Endothelial cell of umbilical vein (primary cell): ENCODE measurements at regions of chr10 and their contacts with region 1.

Region 1: DNA sequence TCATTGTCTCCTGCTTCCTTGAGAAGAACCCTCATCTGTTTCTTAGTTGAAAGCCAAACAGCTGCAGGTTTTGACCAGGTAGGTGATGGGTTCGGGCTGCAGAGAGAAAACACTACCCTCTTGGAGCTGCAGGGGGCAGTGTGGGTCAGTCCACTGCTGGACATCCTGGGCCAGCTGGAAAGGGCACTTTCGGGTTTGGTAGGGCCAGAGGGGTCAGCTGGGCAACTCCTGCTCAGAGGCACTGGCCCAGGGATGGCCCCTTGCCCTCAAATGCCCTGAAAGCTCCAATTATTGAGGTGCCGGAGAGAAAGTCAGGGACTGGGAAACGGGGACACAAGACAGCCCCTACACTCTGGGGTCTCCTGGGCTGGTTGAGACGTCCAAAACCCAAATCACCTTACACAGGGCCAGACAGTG is 90.7 kb downstream of the MKI67 start:
- DNase-seq: peak; percentile 30
- H3K4me3 ChIP-seq: no peak overlapping the region
- H3K27ac ChIP-seq: no peak overlapping the region
- H3K4me1 ChIP-seq: peaks cover 22% of the 10 kb centered on the region
- H3K27me3 ChIP-seq: no peaks in the 10 kb centered on the region
- CTCF ChIP-seq: peak; percentile 76 to 83
- POLR2A ChIP-seq: no peak

Region 2: GRCh38 chr10:128018236-128018635 is 17.3 kb before region 1 on chr10:
- CTCF ChIA-PET with region 1: interaction called, 20 read pairs
- POLR2A ChIA-PET with region 1: no interaction called
- dilution Hi-C with region 1: no loop called
- intact Hi-C with region 1: no loop called
- DNase-seq: peak; percentile 73
- H3K4me3 ChIP-seq: no peak overlapping the region
- H3K27ac ChIP-seq: peak overlapping the region; percentile 54
- H3K4me1 ChIP-seq: peaks cover 3% of the 10 kb centered on the region
- H3K27me3 ChIP-seq: no peaks in the 10 kb centered on the region
- CTCF ChIP-seq: no peak
- POLR2A ChIP-seq: peak; percentile 11

Region 3: GRCh38 chr10:128047351-128047750 is 11.8 kb after region 1 on chr10:
- CTCF ChIA-PET with region 1: interaction called, 25 read pairs
- POLR2A ChIA-PET with region 1: no interaction called
- dilution Hi-C with region 1: no loop called
- intact Hi-C with region 1: no loop called
- DNase-seq: peak; percentile 80
- H3K4me3 ChIP-seq: no peak overlapping the region
- H3K27ac ChIP-seq: peak overlapping the region; percentile 58
- H3K4me1 ChIP-seq: peaks cover 17% of the 10 kb centered on the region
- H3K27me3 ChIP-seq: no peaks in the 10 kb centered on the region
- CTCF ChIP-seq: no peak
- POLR2A ChIP-seq: peak; percentile 28

Region 4: DNA sequence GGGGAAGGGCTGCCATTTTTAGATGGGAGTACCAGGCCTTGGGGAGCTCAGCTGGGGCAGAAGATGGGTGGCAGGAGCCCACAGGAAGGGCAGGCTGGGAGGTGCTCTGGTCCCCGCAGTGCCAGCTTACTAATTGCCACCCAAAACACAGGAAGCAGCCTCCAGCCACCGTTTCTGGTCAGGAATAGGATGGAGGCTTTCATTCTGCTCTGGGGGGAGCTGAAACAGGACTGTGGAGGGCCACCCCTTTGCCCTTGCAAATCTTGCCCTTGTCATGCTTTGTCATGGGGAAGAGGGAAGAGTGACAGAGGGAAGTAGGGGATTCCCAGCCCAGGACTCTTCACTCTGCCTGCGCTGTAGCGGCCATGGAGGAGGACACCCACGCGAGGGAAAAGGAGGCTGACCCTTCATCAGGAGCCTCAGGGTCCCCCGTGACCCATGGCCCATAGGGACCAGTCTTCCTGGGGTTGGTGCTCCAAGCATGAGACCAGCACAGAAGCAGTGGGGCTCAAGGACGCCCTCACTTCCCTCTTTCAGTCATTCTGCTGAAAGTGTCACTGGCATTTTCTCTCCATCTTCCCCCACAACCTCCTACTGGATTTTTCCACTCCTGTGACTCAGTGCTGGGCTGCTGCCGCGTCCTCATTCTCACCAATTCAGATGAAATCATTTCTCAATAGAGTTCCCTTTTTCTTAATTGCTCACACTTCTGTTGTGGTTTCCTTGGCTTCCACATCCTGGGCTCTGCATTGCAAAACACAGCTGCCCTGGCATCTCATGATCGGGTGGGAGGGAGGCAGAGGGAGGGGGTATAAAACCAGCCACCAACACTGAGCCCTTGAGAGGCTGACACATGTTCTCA is 28.8 kb after region 1 on chr10:
- CTCF ChIA-PET with region 1: interaction called, 72 read pairs
- POLR2A ChIA-PET with region 1: no interaction called
- dilution Hi-C with region 1: no loop called
- intact Hi-C with region 1: loop called (anchors 1 kb)
- DNase-seq: no peak
- H3K4me3 ChIP-seq: no peak overlapping the region
- H3K27ac ChIP-seq: no peak overlapping the region
- H3K4me1 ChIP-seq: peaks cover 28% of the 10 kb centered on the region
- H3K27me3 ChIP-seq: no peaks in the 10 kb centered on the region
- CTCF ChIP-seq: no peak
- POLR2A ChIP-seq: no peak